ENCODE measurements at regions of chr13 and their contacts with region 1.

Region 1: GRCh38 chr13:113425931-113426590 is 27.2 kb downstream of the ADPRHL1 start:
- DNase-seq: no peak
- H3K4me3 ChIP-seq: no peak overlapping the region
- H3K27ac ChIP-seq: no peak overlapping the region
- H3K4me1 ChIP-seq: no peaks in the 10 kb centered on the region
- H3K27me3 ChIP-seq: no peaks in the 10 kb centered on the region
- CTCF ChIP-seq: no peak

Region 2: DNA sequence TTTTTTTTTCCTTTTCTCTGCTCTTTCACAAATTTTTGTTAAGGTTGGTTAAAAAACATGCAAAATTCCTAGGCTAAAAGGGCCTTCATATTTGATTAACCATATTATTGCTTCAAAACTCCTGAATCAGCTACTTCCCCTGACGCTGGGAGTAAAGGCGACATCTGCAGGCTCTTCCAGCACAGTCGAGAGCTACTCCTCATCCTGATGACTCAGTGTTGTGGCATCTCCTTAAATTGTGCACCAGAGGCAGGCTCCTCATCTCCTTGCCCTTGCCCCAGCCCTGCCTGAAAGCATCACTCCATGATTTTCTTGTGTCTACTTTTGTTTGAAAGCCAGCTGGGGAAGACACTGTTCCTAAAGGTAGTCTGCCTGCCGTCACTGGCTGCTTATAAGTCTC is 1383.6 kb before region 1 on chr13:
- CTCF ChIA-PET with region 1: no interaction called
- dilution Hi-C with region 1: no loop called
- in situ Hi-C with region 1: no loop called
- intact Hi-C with region 1: no loop called
- DNase-seq: no peak
- H3K4me3 ChIP-seq: no peak overlapping the region
- H3K27ac ChIP-seq: no peak overlapping the region
- H3K4me1 ChIP-seq: no peaks in the 10 kb centered on the region
- H3K27me3 ChIP-seq: no peaks in the 10 kb centered on the region
- CTCF ChIP-seq: no peak

Region 3: GRCh38 chr13:113398963-113399661 is 26.9 kb before region 1 on chr13:
- CTCF ChIA-PET with region 1: no interaction called
- dilution Hi-C with region 1: no loop called
- in situ Hi-C with region 1: no loop called
- intact Hi-C with region 1: loop called (anchors 1 kb)
- DNase-seq: no peak
- H3K4me3 ChIP-seq: no peak overlapping the region
- H3K27ac ChIP-seq: no peak overlapping the region
- H3K4me1 ChIP-seq: peaks cover 2% of the 10 kb centered on the region
- H3K27me3 ChIP-seq: peaks cover 7% of the 10 kb centered on the region
- CTCF ChIP-seq: no peak

Measured in mammary epithelial cell (primary cell).